WTC11 (cell line): ENCODE measurements at regions of chr1 and their contacts with region 1.

Region 1: DNA sequence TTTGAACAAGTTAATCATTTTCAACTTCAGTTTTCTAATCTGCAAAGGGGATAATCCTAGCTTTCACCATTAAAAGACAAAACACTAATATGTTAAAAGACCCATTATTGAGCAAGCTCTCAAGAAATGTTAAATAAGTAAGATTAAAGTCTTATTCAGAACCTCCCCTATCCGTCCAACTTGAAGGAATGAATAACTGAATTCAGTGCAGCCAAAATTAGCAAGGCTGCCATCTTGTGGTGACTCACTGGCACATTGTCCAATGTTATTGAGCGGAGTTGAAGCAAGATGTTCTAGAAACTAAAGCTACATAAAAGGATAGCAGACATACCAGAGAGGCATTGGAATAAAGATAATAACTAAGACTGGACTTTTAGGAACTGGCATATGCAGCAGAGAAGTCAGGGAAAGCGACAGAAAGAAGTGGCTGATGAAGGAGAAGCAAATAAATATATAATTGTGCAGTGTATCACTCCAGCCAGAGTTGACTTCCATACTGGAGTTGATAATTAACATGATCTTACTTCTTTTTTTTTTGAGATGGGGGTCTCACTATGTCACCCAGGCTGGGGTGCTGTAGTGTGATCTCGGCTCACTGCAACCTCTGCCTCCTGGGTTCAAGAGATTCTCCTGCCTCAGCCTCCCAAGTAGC is 8.2 kb upstream of the CAP1 start:
- DNase-seq: peak; percentile 31
- ATAC-seq: peak; percentile 69; the same call in 1 of the 2 replicates
- H3K4me3 Mint-ChIP-seq: no peak overlapping the region
- H3K27ac Mint-ChIP-seq: no peak overlapping the region
- H3K4me1 Mint-ChIP-seq: no peaks in the 10 kb centered on the region; the same call in 1 of the 2 replicates
- H3K27me3 Mint-ChIP-seq: peaks cover 3% of the 10 kb centered on the region
- CTCF ChIP-seq: no peak

Region 2: GRCh38 chr1:39816415-39817090 is 215.8 kb before region 1 on chr1:
- CTCF ChIA-PET with region 1: interaction called, 18 read pairs
- POLR2A ChIA-PET with region 1: no interaction called
- DNase-seq: peak; percentile 67
- ATAC-seq: peak; percentile 84
- H3K4me3 Mint-ChIP-seq: no peak overlapping the region
- H3K27ac Mint-ChIP-seq: no peak overlapping the region
- H3K4me1 Mint-ChIP-seq: peaks cover 5% of the 10 kb centered on the region; the same call in 1 of the 2 replicates
- H3K27me3 Mint-ChIP-seq: peaks cover 13% of the 10 kb centered on the region
- CTCF ChIP-seq: peak; percentile 79

Region 3: DNA sequence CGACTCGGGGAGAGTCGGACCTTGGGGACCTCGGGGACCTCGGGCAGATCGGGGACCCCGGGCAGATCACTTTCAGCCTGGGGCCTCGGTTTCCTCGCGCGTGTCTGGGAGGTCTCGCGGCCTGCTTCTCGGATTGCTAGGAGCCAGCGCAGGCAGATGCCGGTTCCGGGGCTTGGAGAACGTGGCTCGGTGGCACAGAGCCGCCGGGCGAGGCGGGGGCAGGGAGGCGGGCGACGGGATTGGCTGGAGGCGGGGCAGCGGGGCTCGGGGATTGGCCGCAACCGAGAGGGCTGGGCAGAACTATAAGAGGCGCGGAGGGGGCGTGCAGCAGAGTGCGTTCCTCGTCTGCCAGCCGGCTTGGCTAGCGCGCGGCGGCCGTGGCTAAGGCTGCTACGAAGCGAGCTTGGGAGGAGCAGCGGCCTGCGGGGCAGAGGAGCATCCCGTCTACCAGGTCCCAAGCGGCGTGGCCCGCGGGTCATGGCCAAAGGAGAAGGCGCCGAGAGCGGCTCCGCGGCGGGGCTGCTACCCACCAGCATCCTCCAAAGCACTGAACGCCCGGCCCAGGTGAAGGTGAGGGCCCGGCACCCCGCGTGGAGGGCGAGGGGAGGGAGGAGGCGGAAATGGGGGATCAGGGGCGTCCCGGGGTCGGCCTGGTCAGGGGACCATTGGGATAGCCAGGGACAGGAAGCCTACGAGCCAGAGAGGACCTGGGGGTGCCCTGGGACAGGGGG is 77.4 kb before region 1 on chr1 and contains the start of gene MFSD2A:
- CTCF ChIA-PET with region 1: interaction called, 14 read pairs
- POLR2A ChIA-PET with region 1: interaction called, 3 read pairs
- DNase-seq: peak; percentile 95
- ATAC-seq: peak; percentile 93
- H3K4me3 Mint-ChIP-seq: peak within 1 kb of the TSS; percentile 85
- H3K27ac Mint-ChIP-seq: no peak within 1 kb of the TSS
- H3K4me1 Mint-ChIP-seq: peaks cover 27% of the 10 kb centered on the region
- H3K27me3 Mint-ChIP-seq: peaks cover 35% of the 10 kb centered on the region
- CTCF ChIP-seq: no peak
- total RNA-seq, gene MFSD2A: 11.5 to 14.0 TPM (median 12.9 TPM) in 3 replicates

Region 4: DNA sequence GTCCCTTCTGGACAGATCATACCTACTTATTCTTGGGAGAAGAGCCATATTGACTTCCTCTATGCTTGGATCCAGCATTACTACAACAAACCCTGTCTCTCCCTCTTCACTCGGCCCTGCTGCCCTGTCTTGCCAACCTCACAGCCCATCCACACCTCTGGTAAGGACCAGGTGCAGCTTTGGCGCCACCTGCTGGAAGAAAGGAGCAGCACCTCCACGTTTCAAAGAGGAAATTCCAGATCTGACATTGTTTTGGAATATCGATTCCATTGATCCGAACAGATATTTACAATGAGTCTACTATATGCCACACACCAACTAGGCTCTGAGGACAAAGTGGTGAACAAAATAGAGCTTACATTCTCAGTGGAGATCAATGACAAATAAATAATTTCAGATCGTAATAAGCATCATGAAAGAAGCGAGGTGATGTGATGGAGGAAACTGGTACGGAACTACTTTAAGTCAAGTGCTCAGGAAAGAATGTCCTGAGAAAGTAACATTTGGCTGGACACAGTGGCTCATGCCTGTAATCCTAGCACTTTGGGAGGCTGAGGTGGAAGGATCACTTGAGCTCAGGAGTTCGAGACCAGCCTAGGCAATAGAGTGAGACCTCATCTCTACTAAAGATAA is 58.7 kb before region 1 on chr1:
- CTCF ChIA-PET with region 1: interaction called, 38 read pairs
- POLR2A ChIA-PET with region 1: no interaction called
- DNase-seq: peak; percentile 82
- ATAC-seq: peak; percentile 83
- H3K4me3 Mint-ChIP-seq: no peak overlapping the region
- H3K27ac Mint-ChIP-seq: peak overlapping the region; percentile 12
- H3K4me1 Mint-ChIP-seq: peaks cover 15% of the 10 kb centered on the region
- H3K27me3 Mint-ChIP-seq: no peaks in the 10 kb centered on the region; the same call in 1 of the 2 replicates
- CTCF ChIP-seq: peak; percentile 97

Region 5: GRCh38 chr1:40017951-40018575 is 14.3 kb before region 1 on chr1:
- CTCF ChIA-PET with region 1: interaction called, 12 read pairs
- POLR2A ChIA-PET with region 1: no interaction called
- DNase-seq: no peak
- ATAC-seq: peak; percentile 85
- H3K4me3 Mint-ChIP-seq: no peak overlapping the region
- H3K27ac Mint-ChIP-seq: no peak overlapping the region
- H3K4me1 Mint-ChIP-seq: no peaks in the 10 kb centered on the region
- H3K27me3 Mint-ChIP-seq: no peaks in the 10 kb centered on the region
- CTCF ChIP-seq: no peak